Right ventricle myocardium inferior (tissue), 1 donor: ENCODE measurements at regions of chr16 and their contacts with region 1.

Region 1: DNA sequence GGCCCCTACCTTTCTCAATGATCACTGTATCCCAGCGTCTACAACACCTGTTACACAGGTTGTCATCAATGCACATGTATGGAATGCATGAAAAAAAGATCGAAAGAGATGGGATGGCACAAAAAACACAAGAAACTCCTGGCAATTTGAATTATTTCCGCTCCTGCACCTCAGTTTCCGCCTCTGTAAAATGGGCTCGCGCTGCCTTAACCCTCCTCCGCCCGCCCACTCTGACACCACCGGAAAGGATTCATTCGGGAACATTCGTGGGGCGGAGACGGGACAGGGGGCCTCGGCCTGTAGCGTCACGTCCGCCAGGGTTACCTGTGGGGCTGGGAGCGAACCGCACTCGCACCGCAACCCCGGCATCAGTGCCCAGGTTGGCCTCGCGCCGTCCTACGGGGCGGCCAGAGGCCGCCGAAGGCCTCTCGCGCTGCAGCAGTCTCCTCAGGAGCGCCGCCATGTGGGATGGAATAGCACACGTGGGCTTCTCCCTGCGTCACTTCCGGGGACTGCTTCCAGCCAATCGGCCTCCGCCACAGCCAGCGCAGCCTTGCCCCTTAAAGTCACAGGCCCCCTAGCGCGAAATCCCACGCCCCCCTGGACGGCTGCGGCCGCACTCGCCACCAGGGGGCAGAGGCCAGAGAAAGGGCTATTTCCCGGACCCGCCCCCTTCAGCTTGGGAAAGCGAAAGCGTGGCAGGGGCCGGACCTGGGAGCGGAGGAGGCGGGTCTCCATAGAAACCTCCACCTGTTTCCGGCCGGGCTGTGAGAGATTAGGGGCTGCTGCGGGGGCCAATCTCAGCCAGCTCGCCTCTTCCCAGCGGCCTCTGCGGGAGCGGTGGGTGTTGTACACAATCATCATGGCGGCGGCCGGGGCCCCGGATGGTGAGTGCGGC is at the starts of genes EARS2 and UBFD1:
- DNase-seq: peak; percentile 98
- ATAC-seq: peak; percentile 96
- total RNA-seq, gene EARS2: 24.9 TPM
- total RNA-seq, gene UBFD1: 66.4 TPM

Region 2: GRCh38 chr16:22838681-22839080 is 718.4 kb before region 1 on chr16:
- intact Hi-C with region 1: no loop called
- DNase-seq: no peak
- ATAC-seq: no peak

Region 3: GRCh38 chr16:23452572-23453337 is 104.4 kb before region 1 on chr16 and contains the start of gene COG7:
- intact Hi-C with region 1: loop called (anchors 2 kb)
- DNase-seq: peak; percentile 94
- ATAC-seq: peak; percentile 94
- total RNA-seq, gene COG7: 9.8 TPM

Region 4: DNA sequence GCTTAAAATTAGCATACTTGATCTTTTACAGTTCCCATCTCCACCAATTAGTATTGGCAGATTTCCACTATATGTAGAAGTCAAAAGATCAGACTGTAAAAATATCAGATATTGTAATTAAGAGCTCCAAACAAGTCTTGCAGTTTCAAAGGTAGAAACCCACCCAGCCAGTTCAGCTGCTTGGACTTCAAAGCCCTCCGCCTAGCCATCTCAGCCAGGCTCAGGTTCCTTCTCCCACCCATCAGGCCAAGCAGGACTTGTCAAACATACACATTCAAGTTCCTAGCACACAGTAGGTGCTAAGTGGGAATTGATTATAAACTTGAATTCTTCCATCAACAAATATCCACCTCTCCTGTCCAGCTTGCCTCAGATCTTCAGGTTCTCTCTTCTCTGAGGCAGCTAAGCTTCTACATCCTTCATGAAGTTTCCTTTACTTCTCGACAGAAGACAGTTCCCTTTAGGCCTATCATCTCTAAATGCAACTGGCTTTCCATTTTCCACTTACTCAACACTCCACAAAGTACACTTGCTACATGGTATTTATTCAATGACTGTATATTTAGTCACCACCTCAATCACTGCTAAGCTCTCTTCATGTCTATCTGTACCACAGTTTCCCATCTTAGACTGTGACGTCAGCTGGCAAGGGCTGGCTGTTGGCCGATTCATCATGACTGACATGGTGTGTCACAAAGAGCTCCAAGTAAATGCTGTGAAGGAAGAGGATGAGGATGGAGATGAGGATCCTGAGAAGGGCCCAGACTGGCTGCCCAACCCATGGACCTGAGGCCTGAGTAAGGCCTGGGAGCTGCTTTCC is 90.9 kb before region 1 on chr16:
- intact Hi-C with region 1: no loop called
- DNase-seq: no peak
- ATAC-seq: no peak

Region 5: DNA sequence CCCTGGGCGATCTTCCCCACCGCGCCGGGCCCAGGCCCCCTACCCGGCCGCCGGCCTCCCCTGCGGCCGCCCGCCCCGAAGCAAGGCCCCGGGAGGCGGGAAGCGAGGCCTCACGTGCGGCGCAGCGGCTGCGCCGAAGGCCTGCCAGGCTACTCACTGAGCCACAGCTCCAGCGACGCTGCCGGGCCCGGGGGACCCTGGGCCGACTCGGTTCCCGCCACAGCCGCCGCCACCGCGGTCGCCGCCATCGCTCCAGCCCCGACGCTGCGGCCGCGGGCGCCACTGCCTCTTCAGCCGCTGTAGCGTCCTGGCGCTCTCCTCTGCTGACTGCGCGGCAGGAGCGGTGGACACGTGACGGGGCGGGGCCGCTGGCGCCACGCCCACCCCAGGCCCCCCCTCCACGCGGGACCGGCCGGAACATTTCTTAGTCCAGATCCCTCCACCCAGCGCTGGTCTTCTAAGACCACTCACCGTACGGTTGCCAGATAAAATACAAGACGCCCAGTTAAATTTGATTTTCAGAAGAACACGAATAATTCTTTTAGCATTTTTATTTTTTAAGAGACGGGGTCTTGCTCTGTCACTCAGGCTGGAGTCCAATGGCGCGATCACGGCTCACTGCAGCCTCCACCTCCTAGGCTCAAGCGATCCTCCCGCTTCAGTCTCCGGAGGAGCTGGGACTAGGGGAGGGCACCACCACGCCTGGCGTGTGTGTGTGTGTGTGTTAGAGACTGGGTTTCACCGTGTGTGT is 46.8 kb before region 1 on chr16 and contains the start of gene GGA2:
- intact Hi-C with region 1: loop called (anchors 1 kb)
- DNase-seq: peak; percentile 91
- ATAC-seq: peak; percentile 92
- total RNA-seq, gene GGA2: 51.7 TPM

Region 6: DNA sequence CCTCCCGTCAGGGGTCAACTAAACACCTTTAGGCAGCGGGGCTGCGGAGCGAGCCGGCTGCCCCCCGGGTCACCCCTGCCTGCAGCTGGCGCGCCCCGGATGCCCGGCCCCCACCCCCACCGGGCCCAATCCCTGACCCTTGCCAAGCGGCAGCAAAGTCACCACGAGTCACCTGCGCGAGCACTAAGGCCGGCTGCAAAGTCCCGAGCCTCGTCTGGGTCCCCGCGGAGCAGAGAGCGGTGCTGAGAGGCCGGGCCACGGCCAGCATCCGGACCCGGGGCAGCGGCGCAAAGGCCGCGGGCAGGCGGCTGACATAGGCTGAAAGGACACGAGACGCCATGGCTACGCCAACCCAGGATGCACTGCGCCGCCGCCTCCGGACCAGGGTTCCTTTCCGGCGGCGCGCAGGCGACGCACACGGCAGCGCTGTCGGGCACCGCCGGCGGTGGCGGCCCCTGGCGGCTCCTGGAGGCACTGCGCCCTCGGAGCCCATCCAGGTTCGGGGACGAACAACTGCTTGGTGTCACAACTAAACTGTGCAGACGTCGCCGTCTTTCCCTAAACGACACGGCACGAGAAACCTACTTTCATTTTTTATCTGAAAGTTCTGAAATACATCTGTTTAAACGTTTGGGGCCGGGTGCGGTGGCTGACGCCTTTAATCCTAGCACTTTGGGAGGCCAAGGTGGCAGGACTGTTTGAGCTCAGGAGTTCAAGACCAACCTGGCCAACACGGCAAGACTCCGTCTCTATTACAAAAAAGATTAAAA is 39.0 kb after region 1 on chr16 and contains the start of gene NDUFAB1:
- intact Hi-C with region 1: loop called (anchors 2 kb)
- DNase-seq: peak; percentile 97
- ATAC-seq: peak; percentile 98
- total RNA-seq, gene NDUFAB1: 577 TPM

Region 7: GRCh38 chr16:23640931-23641765 is 84.0 kb after region 1 on chr16 and contains the starts of genes DCTN5 and PALB2:
- intact Hi-C with region 1: loop called (anchors 2 kb)
- DNase-seq: peak; percentile 97
- ATAC-seq: peak; percentile 100
- total RNA-seq, gene DCTN5: 38.2 TPM
- total RNA-seq, gene PALB2: 4.9 TPM